Lower leg skin (tissue), 4 donors: ENCODE measurements at regions of chr3 and their contacts with region 1.

Region 1: GRCh38 chr3:43736558-43736995 is 45.8 kb downstream of the ABHD5 start:
- DNase-seq: peak in 1 of 2 donors; percentile 8
- H3K4me3 ChIP-seq: no peak overlapping the region
- CTCF ChIP-seq: no peak
- POLR2A ChIP-seq: no peak

Region 2: GRCh38 chr3:42739401-42740158 is 997.0 kb before region 1 on chr3:
- intact Hi-C with region 1: no loop called
- DNase-seq: peak; percentile 56 to 91
- H3K4me3 ChIP-seq: no peak overlapping the region
- CTCF ChIP-seq: no peak
- POLR2A ChIP-seq: no peak

Region 3: GRCh38 chr3:44906997-44907396 is 1170.4 kb after region 1 on chr3:
- intact Hi-C with region 1: no loop called
- DNase-seq: no peak
- H3K4me3 ChIP-seq: no peak overlapping the region
- CTCF ChIP-seq: no peak
- POLR2A ChIP-seq: no peak

Region 4: GRCh38 chr3:45258317-45258716 is 1521.7 kb after region 1 on chr3:
- intact Hi-C with region 1: loop called (anchors 5 kb)
- DNase-seq: no peak
- H3K4me3 ChIP-seq: no peak overlapping the region
- CTCF ChIP-seq: no peak
- POLR2A ChIP-seq: no peak